IMR-90 (cell line): ENCODE measurements at regions of chr3 and their contacts with region 1.

Region 1: GRCh38 chr3:191051037-191051436 is 148.0 kb upstream of the OSTN start:
- DNase-seq: peak; percentile 47
- ATAC-seq: peak; percentile 85
- H3K4me3 ChIP-seq: no peak overlapping the region
- H3K27ac ChIP-seq: no peak overlapping the region
- H3K4me1 ChIP-seq: no peaks in the 10 kb centered on the region
- H3K27me3 ChIP-seq: no peaks in the 10 kb centered on the region
- CTCF ChIP-seq: peak; percentile 70
- POLR2A ChIP-seq: no peak
- RAD21 ChIP-seq: peak; percentile 63

Region 2: GRCh38 chr3:190513409-190514162 is 537.5 kb before region 1 on chr3 and contains the start of gene IL1RAP:
- CTCF ChIA-PET with region 1: no interaction called
- POLR2A ChIA-PET with region 1: no interaction called
- dilution Hi-C with region 1: no loop called
- in situ Hi-C with region 1: no loop called
- intact Hi-C with region 1: loop called (anchors 10 kb)
- DNase-seq: peak; percentile 88
- ATAC-seq: peak; percentile 98
- H3K4me3 ChIP-seq: peak within 1 kb of the TSS; percentile 60
- H3K27ac ChIP-seq: peak within 1 kb of the TSS; percentile 60
- H3K4me1 ChIP-seq: peaks cover 7% of the 10 kb centered on the region; the same call in 1 of the 2 replicates
- H3K27me3 ChIP-seq: no peaks in the 10 kb centered on the region
- CTCF ChIP-seq: peak; percentile 77
- POLR2A ChIP-seq: peak; percentile 56
- RAD21 ChIP-seq: peak; percentile 46
- total RNA-seq, gene IL1RAP: 9.4 and 11.3 TPM in 2 replicates

Region 3: GRCh38 chr3:190811775-190812480 is 239.1 kb before region 1 on chr3:
- CTCF ChIA-PET with region 1: interaction called, 4 read pairs
- POLR2A ChIA-PET with region 1: no interaction called
- dilution Hi-C with region 1: no loop called
- in situ Hi-C with region 1: no loop called
- intact Hi-C with region 1: loop called (anchors 1 kb)
- DNase-seq: peak; percentile 60
- ATAC-seq: peak; percentile 68
- H3K4me3 ChIP-seq: no peak overlapping the region
- H3K27ac ChIP-seq: no peak overlapping the region
- H3K4me1 ChIP-seq: no peaks in the 10 kb centered on the region
- H3K27me3 ChIP-seq: peaks cover 2% of the 10 kb centered on the region; the same call in 1 of the 2 replicates
- CTCF ChIP-seq: peak; percentile 71
- POLR2A ChIP-seq: no peak
- RAD21 ChIP-seq: peak; percentile 55; the same call in 1 of the 2 replicates

Region 4: DNA sequence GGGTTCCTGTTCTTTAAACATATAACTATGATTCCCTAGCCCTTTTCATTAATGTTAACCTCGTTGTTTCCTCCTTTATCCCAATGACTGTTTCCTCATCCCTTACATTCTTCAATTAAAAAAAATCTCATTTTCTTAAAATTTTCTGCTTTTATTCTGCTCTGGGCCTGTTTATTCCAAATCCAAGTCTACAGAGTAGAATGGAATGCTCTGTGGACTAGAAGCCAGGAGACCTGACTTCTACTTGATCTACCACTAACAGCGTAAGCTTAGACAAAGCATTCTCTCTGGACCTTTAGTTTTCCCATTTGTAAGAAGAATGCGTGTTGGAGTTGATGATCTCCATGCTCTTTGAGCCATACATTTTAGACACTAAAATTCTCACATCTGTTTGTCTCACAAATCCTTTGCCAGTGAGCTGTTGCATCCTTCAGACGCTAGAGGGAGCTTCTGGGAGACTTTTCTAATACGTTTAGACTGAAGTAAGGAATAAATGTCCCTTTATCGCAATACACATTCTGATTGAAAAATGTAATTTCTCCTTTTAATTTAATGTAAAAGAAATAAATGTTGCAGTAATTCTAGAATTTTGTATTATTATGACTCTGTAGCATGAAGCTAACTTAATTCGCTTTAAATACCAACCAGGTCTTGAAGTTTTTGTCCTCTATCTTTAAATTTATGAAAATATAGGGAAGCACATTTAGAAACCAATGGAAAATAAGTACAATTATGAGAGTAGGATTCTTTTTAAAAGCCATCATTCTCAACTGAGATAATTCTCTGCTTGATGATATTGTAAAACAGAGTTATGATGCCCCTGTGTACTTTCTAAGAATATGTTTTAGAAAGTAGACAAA is 166.8 kb before region 1 on chr3:
- CTCF ChIA-PET with region 1: interaction called, 12 read pairs
- POLR2A ChIA-PET with region 1: no interaction called
- dilution Hi-C with region 1: no loop called
- in situ Hi-C with region 1: loop called (anchors 10 kb)
- intact Hi-C with region 1: loop called (anchors 1 kb)
- DNase-seq: peak; percentile 66
- ATAC-seq: peak; percentile 94
- H3K4me3 ChIP-seq: no peak overlapping the region
- H3K27ac ChIP-seq: no peak overlapping the region
- H3K4me1 ChIP-seq: no peaks in the 10 kb centered on the region
- H3K27me3 ChIP-seq: no peaks in the 10 kb centered on the region
- CTCF ChIP-seq: peak; percentile 87
- POLR2A ChIP-seq: no peak
- RAD21 ChIP-seq: peak; percentile 70

Region 5: GRCh38 chr3:191076903-191077552 is 26.0 kb after region 1 on chr3:
- CTCF ChIA-PET with region 1: no interaction called
- POLR2A ChIA-PET with region 1: no interaction called
- dilution Hi-C with region 1: no loop called
- in situ Hi-C with region 1: no loop called
- intact Hi-C with region 1: no loop called
- DNase-seq: peak; percentile 19
- ATAC-seq: peak; percentile 61; the same call in 1 of the 2 replicates
- H3K4me3 ChIP-seq: no peak overlapping the region
- H3K27ac ChIP-seq: no peak overlapping the region
- H3K4me1 ChIP-seq: 0 out of 2 replicates have a peak, but pooled peaks cover 3% of the 10 kb centered on the region
- H3K27me3 ChIP-seq: no peaks in the 10 kb centered on the region
- CTCF ChIP-seq: no peak
- POLR2A ChIP-seq: no peak
- RAD21 ChIP-seq: no peak